HEK293T (cell line): ENCODE measurements at regions of chr4 and their contacts with region 1.

Region 1: DNA sequence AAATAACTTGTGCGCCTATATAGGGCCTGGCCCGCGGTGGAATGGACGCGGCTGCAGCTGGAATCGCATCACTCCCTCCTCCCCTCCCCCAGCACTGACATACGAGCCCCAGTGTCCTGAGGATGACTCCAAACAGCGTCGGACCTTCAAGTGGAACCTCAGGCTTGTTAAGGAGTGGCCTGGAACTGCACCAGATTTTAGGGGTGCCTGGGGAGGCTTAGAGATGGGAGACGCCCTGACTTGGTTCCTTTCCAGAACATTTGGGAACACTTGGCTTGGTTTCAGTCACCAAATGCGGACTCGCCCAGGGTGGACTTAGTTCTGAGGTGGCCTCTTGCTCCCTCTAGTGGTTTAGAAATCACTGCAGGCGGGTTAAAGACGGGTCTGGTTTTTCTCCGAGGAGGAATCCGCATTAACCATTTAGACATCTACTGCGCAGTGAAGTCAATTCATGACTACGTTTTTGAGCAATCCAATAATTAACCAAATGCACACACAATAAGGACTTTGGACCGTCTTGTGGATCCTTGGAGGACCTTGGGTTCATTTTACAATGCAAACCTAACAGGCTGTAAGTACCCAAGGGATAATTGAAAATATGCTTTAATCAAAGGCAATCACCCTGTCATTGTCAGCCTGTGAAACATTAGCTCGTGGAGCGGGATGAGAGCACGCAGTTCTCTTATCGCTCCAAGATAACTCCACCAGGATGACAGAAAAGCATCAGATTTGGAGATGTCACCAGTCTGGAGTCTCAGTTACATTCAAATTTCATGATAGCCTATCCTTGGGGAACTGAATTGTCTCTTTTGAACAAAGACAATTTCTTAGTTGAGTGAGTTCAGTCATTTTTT is 11.2 kb upstream of the PDGFRA start:
- DNase-seq: peak; percentile 79

Region 2: DNA sequence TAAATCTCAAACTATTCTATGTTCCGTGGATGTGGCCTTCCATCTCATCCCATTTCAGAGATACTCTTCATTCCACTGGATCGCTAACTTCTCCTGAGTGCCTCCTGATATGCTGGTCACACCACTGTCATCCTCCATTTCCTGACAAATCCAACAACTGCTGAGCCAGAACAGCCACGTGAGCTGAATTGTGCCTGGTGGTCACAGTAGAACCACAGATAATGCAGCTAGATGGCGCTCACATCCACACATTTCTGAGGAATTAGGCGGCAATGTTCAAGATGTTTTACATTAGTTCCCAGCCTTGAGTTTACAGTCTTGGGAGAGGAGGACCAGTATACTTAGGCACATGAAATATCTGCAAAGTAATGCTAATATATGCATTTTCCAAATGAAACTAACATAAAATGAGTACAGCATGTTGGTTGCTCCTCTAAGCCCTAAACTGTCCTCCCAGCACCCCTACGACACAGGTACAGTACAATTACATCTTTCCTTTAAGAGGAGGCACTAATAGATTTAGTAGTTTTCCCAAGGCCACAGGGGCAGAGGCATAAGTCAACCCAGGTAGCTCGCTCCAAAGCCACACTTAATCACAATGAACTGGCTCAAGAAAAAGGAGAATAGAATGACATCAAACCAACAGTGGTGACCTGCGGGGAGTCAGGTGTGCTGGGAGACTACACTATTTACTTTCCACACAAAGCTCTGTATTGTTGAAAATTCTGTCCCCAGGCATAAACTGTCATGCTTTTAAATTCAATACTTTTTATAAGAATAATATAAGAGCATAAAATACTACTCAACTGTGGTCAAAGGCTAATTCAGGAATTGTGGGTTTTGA is 287.7 kb before region 1 on chr4:
- CTCF ChIA-PET with region 1: interaction called, 18 read pairs
- POLR2A ChIA-PET with region 1: no interaction called
- DNase-seq: peak; percentile 76

Region 3: GRCh38 chr4:54318904-54319303 is 101.0 kb after region 1 on chr4:
- CTCF ChIA-PET with region 1: no interaction called
- POLR2A ChIA-PET with region 1: no interaction called
- DNase-seq: peak; percentile 49